Naive thymus-derived CD8-positive, alpha-beta T cell (primary cell): ENCODE measurements at regions of chr13 and their contacts with region 1.

Region 1: GRCh38 chr13:75326173-75327134 is 155.5 kb downstream of the TBC1D4 start:
- DNase-seq: peak; percentile 12 to 88 (median 64)
- ATAC-seq: peak; percentile 91
- H3K4me3 Mint-ChIP-seq: peak overlapping the region; percentile 90 to 96 (median 94)
- H3K27ac Mint-ChIP-seq: peak overlapping the region; percentile 90 to 100 (median 98)
- H3K4me1 Mint-ChIP-seq: peaks cover 6 to 64% (median 50%) of the 10 kb centered on the region in 4 donors
- H3K27me3 Mint-ChIP-seq: no peaks in the 10 kb centered on the region

Region 2: GRCh38 chr13:75258159-75258782 is 68.2 kb before region 1 on chr13:
- POLR2A ChIA-PET with region 1: no interaction called
- DNase-seq: peak in 3 of 10 donors; percentile 15 to 22 (median 19)
- ATAC-seq: no peak
- H3K4me3 Mint-ChIP-seq: no peak overlapping the region
- H3K27ac Mint-ChIP-seq: no peak overlapping the region
- H3K4me1 Mint-ChIP-seq: no peaks in the 10 kb centered on the region
- H3K27me3 Mint-ChIP-seq: peaks cover 0 to 11% (median 1%) of the 10 kb centered on the region in 5 donors

Region 3: GRCh38 chr13:75341028-75341427 is 14.6 kb after region 1 on chr13:
- POLR2A ChIA-PET with region 1: interaction called, 10 read pairs
- DNase-seq: no peak
- ATAC-seq: no peak
- H3K4me3 Mint-ChIP-seq: no peak overlapping the region
- H3K27ac Mint-ChIP-seq: no peak overlapping the region
- H3K4me1 Mint-ChIP-seq: no peaks in the 10 kb centered on the region
- H3K27me3 Mint-ChIP-seq: no peaks in the 10 kb centered on the region

Region 4: GRCh38 chr13:75372517-75372916 is 46.1 kb after region 1 on chr13:
- POLR2A ChIA-PET with region 1: interaction called, 10 read pairs
- DNase-seq: peak in 5 of 10 donors; percentile 6 to 57 (median 31)
- ATAC-seq: peak; percentile 75 to 76
- H3K4me3 Mint-ChIP-seq: no peak overlapping the region
- H3K27ac Mint-ChIP-seq: peak overlapping the region in 1 of 10 donors; percentile 11
- H3K4me1 Mint-ChIP-seq: no peaks in the 10 kb centered on the region
- H3K27me3 Mint-ChIP-seq: peaks cover 0 to 3% (median 0%) of the 10 kb centered on the region in 5 donors